Mammary epithelial cell (primary cell): ENCODE measurements at regions of chr16 and their contacts with region 1.

Region 1: DNA sequence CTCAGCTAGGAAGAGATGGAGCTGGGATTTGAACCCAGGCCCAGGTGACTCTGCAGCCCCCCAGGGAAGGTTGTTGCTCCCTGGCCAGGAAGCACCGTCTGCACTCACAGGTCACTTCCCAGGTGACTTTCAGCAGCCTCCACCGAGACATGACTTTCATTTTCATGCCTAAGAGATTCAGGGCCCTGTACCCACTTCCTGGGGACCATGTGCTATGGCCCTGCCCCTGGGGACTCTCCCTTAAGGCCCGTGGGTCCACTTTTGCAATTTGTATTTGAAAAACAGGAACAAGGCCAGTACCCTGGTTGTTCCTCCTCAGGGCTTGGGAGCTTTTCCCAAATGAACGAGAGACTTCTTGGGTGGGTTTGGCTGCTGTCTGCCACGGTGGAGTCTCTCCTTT is 191.0 kb downstream of the IRF8 start:
- DNase-seq: no peak
- H3K4me3 ChIP-seq: no peak overlapping the region
- H3K27ac ChIP-seq: no peak overlapping the region
- H3K4me1 ChIP-seq: no peaks in the 10 kb centered on the region
- H3K27me3 ChIP-seq: no peaks in the 10 kb centered on the region
- CTCF ChIP-seq: no peak

Region 2: DNA sequence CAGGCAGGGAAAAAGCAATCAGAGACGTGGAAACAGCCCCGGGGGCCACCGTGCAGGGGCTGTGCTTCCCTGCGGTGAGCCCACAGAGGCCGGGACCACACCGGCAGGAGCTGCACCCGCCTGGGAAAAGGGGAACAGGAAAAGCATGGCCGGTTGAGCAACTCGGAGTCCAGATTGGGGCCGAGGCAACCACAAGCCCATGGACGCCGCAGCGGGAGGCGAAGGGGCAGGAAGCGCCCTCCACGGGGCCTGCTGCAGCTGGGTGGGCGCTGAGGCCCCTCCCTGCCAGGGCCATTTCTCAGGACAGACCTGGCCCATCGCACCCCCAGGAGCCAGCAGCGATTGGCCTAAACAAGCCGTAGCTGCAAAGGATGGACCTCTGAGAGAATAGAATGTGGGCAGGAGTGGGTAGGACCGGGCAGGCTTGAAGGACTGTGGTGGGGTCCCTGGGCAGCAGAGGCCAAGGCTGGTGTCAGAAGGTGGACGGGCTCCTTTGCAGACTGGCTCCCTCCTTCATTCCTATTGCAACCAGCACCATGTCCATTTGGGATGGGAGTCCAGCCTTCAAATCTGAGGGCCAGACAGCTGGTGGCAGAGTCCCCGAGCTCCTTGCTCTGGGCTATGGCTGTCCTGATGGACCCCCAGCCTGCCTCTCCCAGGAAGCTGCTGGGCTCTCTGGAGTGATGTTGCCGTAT is 260.1 kb before region 1 on chr16:
- CTCF ChIA-PET with region 1: no interaction called
- dilution Hi-C with region 1: loop called (anchors 10 kb)
- in situ Hi-C with region 1: no loop called
- intact Hi-C with region 1: no loop called
- DNase-seq: no peak
- H3K4me3 ChIP-seq: no peak overlapping the region
- H3K27ac ChIP-seq: no peak overlapping the region
- H3K4me1 ChIP-seq: no peaks in the 10 kb centered on the region
- H3K27me3 ChIP-seq: no peaks in the 10 kb centered on the region
- CTCF ChIP-seq: no peak